SK-N-SH (cell line): ENCODE measurements at regions of chr1 and their contacts with region 1.

Region 1: DNA sequence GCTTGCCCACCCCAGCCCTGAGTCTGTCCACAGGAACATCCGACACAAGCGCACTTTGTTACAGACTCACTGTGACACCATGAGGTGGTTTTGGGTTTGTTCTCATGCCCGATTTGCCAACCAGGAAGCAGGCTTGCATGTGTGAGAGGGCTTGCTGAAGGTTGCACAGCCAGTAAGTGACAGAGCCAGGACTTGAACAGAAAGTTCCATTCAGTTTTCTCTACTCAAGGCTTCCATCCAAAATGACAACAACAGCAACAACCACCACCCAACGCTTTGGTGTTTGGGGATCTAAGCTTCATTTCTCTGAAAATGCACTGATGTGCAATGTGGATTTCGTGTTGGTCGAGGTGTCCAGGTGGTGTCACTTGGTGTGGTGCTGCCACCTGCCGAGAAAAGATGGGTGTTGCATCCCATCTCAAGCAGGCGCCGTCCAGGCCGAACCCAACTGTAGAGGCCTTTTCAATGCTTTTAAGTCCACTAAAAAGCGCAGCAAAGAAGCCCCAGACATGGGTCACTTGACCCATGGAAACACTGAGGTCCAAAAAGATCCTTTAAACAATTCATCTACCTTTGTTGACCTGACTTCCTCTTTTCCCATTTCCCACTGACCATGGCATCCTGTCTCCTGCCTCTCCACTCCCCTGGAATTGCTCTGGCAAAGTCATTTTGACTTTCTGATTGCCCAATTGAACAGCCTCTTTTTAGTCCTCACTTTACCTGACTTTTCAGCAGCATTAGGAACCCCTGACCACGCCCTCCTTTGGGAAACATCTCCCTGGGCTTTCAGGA is 12.2 kb downstream of the CITED4 start:
- DNase-seq: peak; percentile 78
- H3K4me3 ChIP-seq: no peak overlapping the region
- H3K27ac ChIP-seq: no peak overlapping the region
- H3K4me1 ChIP-seq: no peaks in the 10 kb centered on the region; a peak in 1 of 4 replicates
- H3K27me3 ChIP-seq: no peaks in the 10 kb centered on the region
- CTCF ChIP-seq: peak; percentile 84
- EP300 ChIP-seq: no peak
- RAD21 ChIP-seq: peak; percentile 89

Region 2: DNA sequence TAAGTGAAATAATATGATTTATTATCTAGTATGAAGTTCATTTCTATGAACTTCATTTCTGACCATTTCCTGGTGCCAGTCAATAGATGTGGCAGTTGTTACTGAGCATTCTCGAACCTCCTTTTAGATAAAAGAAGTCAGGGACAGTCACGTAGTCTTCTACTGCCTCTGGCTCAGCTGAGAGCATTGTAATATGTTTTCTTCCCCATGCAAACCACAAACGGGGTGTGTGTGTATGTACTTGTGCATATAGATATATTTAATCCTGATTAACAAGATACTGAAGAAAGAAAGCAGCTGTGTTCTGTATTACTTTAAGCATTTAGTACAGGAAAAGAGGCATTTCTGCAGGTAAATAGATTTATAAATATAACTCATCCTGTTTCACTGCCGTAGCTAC is 297.0 kb before region 1 on chr1:
- CTCF ChIA-PET with region 1: no interaction called
- POLR2A ChIA-PET with region 1: no interaction called
- DNase-seq: no peak
- H3K4me3 ChIP-seq: no peak overlapping the region
- H3K27ac ChIP-seq: no peak overlapping the region
- H3K4me1 ChIP-seq: no peaks in the 10 kb centered on the region
- H3K27me3 ChIP-seq: no peaks in the 10 kb centered on the region
- CTCF ChIP-seq: no peak
- EP300 ChIP-seq: no peak
- RAD21 ChIP-seq: no peak

Region 3: DNA sequence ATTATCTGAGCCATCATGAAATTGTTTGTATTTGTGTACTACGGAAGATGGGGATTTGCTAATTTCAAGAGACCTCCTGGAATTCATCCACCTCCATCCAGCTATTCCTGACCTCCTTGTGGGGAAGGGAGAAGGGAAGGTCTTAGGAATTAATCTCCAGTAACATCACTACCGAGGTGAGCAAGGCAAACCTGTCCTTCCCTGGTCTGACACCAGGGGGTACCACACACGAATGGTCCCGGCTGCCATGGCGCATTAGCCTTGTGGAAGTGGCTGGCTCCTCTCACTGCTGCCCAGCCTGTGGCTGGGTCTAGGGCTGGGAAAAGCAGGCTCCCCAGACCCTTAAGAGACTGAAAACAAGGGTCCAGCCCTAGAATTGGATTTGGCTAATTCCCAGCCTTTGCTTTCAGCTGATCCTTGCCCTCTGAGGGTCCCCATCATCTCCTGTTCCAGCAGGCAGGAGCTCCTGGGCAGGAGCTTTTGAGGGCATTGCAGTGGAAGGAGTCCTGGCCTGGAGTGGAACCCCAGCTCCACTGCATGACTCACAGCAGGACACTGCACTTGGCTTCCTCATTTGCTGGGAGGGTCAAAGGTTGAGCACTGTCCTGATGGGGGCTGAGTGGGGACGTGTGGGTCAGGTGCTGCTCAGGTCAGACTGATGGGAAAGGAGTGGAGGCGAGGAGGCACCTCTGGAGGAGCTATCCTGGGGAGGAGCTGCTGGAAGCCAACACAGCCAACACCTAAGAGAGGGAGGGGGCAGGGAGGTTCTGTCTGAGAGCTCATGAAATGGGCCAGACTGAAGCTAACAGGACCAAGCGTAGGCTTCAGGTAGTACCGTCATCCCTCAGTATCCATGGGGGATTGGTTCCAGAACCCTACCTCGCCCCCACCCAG is 219.3 kb before region 1 on chr1:
- CTCF ChIA-PET with region 1: interaction called, 11 read pairs
- POLR2A ChIA-PET with region 1: no interaction called
- DNase-seq: peak; percentile 72
- H3K4me3 ChIP-seq: no peak overlapping the region; a peak in 1 of 4 replicates
- H3K27ac ChIP-seq: no peak overlapping the region
- H3K4me1 ChIP-seq: peaks cover 0 to 4% of the 10 kb centered on the region in 2 experiments; a peak in 1 of 4 replicates
- H3K27me3 ChIP-seq: no peaks in the 10 kb centered on the region
- CTCF ChIP-seq: peak; percentile 47; the same call in 1 of the 2 replicates
- EP300 ChIP-seq: no peak
- RAD21 ChIP-seq: peak; percentile 54

Region 4: GRCh38 chr1:40774266-40774998 is 75.6 kb before region 1 on chr1:
- CTCF ChIA-PET with region 1: interaction called, 153 read pairs
- POLR2A ChIA-PET with region 1: no interaction called
- DNase-seq: peak; percentile 69
- H3K4me3 ChIP-seq: no peak overlapping the region
- H3K27ac ChIP-seq: no peak overlapping the region
- H3K4me1 ChIP-seq: peaks cover 0 to under 1% of the 10 kb centered on the region in 2 experiments; a peak in 1 of 4 replicates
- H3K27me3 ChIP-seq: no peaks in the 10 kb centered on the region
- CTCF ChIP-seq: peak; percentile 74
- EP300 ChIP-seq: no peak
- RAD21 ChIP-seq: peak; percentile 62

Region 5: DNA sequence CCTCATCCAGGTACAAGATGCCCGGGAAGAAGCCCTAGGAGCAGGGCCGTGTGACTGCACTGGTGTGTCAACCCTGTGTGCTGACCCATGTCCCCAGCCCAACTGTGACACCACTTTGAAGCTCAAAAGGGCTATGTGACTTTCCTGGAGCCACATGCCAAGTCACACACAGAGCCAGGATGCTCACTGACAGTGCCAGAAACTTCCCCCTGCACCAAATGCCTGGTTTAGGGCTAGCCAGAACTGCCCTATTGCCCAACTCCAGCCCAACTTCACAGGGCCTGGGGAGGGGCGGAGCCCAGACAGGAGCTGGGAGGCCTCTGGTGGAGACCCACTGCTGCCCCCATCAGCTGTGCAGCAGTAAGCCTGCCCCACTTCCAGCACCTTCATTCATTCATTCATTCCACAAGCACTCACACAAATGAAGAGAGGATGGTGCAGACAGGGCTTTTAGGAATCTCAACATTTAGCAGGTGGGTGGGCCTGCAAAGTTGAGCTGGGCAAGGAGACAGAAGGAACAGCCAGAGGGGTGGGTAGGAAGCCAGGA is 29.7 kb before region 1 on chr1:
- CTCF ChIA-PET with region 1: interaction called, 10 read pairs
- POLR2A ChIA-PET with region 1: no interaction called
- DNase-seq: peak; percentile 57
- H3K4me3 ChIP-seq: no peak overlapping the region
- H3K27ac ChIP-seq: no peak overlapping the region
- H3K4me1 ChIP-seq: peaks cover 10 to 16% of the 10 kb centered on the region in 2 experiments; a peak in 2 of 4 replicates
- H3K27me3 ChIP-seq: no peaks in the 10 kb centered on the region
- CTCF ChIP-seq: no peak
- EP300 ChIP-seq: no peak
- RAD21 ChIP-seq: no peak

Region 6: DNA sequence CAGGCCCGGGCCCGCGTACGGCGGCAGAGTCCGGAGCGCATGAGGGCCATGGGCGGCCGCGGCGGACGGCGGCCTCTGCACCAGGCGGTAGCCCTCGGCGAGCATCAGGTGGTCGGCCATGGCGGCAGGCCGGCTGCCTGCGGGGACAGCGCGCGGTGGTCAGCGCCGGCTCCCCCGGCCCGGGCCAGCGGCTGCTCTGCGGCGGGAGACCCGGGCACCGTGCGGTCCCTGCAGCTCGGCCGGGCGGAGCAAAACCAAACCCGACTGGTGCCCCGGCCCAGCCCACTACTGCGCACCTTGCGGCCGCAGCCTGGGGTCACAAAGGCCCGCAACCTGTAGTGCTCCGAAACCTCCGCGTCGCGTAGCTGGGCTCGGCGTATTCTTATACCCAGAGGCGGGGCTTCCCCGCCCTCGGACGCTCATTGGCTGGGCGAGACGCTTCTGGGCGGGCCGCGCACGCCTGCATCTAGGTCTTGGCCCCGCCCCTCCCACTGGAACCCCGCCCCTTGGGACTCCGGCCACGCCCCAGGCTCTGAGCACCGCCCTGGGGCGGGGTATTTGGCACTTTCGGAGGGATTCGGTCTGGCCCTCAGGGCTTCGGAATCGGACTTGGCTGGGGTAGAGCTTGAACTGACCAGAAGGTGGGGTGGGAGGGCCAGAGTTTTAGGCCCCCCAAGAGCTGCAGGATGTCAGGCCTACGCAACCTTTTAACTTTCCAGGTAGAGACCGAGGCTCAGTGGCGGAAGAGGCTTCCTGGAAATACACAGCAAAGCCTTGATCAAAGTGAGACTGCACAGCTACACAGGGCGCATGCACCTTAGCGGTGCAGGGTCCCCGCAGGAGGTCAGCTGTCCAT is 12.2 kb after region 1 on chr1 and contains the start of gene CITED4:
- CTCF ChIA-PET with region 1: interaction called, 60 read pairs
- POLR2A ChIA-PET with region 1: no interaction called
- DNase-seq: peak; percentile 98
- H3K4me3 ChIP-seq: peak within 1 kb of the TSS; percentile 62 to 68
- H3K27ac ChIP-seq: no peak within 1 kb of the TSS; a peak in 1 of 4 replicates
- H3K4me1 ChIP-seq: peaks cover 0 to 11% of the 10 kb centered on the region in 2 experiments; a peak in 2 of 4 replicates
- H3K27me3 ChIP-seq: no peaks in the 10 kb centered on the region
- CTCF ChIP-seq: peak; percentile 32; the same call in 1 of the 2 replicates
- EP300 ChIP-seq: no peak
- RAD21 ChIP-seq: peak; percentile 43
- polyA plus RNA-seq, gene CITED4: 5.9 and 10.1 TPM in 2 replicates

Region 7: GRCh38 chr1:40922981-40923380 is 73.0 kb after region 1 on chr1:
- CTCF ChIA-PET with region 1: interaction called, 11 read pairs
- POLR2A ChIA-PET with region 1: no interaction called
- DNase-seq: no peak
- H3K4me3 ChIP-seq: no peak overlapping the region
- H3K27ac ChIP-seq: no peak overlapping the region
- H3K4me1 ChIP-seq: peaks cover 0 to 3% of the 10 kb centered on the region in 2 experiments; a peak in 1 of 4 replicates
- H3K27me3 ChIP-seq: no peaks in the 10 kb centered on the region
- CTCF ChIP-seq: no peak
- EP300 ChIP-seq: no peak
- RAD21 ChIP-seq: no peak

Region 8: DNA sequence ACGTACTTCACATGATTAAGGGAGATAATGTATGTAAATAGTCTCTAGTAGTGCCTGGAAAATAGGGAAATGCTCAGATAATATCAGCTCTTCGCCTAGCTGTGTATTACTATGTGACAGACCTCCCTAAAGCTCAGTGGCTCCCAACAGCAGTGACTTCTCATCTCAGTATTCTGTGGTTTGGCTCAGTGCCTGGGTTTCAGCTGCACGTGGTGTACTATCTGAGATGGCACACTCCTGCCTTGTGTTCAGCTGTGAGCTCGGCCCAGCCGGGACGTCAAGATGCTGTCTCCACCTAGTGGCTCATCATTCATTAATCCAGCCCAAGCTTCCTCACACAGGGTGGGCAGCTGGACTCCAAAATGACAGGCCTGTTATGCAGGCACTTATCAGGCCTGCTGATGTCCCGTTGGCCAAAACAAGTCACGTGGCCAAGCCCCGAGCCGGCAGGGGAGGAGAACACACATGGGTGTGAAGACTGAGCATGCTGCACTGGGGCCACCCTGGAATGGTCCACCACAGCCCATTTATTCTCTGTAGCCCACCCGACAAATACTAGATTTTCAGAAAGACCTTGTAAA is 153.7 kb after region 1 on chr1:
- CTCF ChIA-PET with region 1: interaction called, 11 read pairs
- POLR2A ChIA-PET with region 1: no interaction called
- DNase-seq: peak; percentile 86
- H3K4me3 ChIP-seq: no peak overlapping the region
- H3K27ac ChIP-seq: peak overlapping the region; percentile 75 to 82
- H3K4me1 ChIP-seq: peaks cover 12 to 18% of the 10 kb centered on the region in 2 experiments
- H3K27me3 ChIP-seq: no peaks in the 10 kb centered on the region
- CTCF ChIP-seq: peak; percentile 72
- EP300 ChIP-seq: peak; percentile 51 to 86; a peak in 3 of 4 replicates
- RAD21 ChIP-seq: peak; percentile 71